Activated CD8-positive, alpha-beta memory T cell treated with anti-CD3 and anti-CD28 coated beads, Interleukin-2, amount 10 ng/mL, durations not matched to agents 7 days and 5 days (primary cell): ENCODE measurements at regions of chr17 and their contacts with region 1.

Region 1: DNA sequence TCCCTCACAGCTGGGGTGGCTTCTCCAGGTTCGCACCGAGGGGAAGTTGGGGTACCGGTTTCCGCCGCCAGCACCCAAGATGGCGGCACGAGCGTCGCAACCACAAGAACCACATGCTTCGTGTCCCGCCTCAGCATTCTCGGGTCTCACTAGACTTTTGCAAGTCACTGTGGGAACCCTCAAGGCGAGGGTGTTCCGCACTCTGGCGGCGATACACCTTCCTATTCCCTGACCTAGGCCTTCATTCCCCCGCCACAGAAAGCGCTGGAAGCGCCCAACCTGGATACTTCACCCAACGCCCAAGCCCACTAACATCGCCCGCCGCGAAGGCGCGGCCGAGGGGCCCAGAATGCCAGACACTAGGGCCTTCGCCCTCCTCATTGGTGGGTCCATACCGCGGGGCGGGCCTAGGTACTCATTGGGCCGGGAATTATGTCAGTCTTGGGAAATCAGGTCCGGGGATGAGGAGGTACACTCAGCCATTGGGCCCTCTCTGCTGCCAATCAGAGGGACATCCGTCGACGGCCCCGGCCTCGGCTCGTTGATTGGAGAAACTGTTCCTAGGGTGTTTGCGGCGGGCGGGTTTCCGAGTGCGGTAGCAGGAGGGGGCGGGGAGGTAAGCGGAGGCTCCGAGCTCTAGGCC is at the start of gene NFE2L1:
- DNase-seq: peak; percentile 100
- ATAC-seq: peak; percentile 95
- H3K4me3 Mint-ChIP-seq: peak within 1 kb of the TSS; percentile 98
- H3K27ac Mint-ChIP-seq: peak within 1 kb of the TSS; percentile 96
- H3K4me1 Mint-ChIP-seq: peaks cover 60% of the 10 kb centered on the region
- H3K27me3 Mint-ChIP-seq: no peaks in the 10 kb centered on the region
- total RNA-seq, gene NFE2L1: 56.1 to 80.8 TPM

Region 2: DNA sequence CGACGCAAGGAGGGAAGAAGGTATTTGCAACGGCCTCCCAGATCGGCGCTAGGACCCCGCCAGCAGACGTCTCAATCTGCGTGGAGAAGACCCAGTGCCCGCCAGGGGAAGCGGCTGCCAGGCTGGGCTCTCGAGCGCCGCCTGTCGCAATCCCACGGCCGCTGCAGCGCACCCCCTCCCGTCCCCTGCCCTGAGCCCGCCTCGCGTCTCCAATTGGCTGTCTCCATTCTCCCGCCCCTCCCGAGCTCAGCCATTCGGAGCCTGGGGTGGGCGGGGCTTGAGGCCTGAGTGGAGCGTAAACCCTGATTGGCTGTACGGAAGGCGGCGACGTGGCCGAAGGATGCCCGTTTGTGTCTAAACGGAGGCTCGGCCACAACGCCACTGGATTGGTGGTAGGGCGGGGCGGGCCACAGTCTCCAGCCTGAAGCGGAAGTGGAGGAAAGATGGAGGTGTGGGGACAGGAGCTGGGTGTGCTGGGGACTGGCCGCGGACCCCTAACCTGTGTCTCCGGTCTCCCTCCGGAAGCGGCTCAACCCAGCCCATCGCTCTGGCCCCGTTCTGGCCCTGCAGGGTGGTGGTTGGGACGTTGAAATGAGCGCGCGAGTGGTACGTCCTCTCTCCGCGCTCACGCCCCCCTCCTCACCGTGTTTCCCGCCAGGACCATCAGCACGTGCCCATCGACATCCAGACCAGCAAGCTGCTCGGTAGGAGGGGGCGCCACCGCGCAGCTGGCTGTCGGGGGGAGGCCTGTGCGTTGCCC is 77.0 kb before region 1 on chr17 and contains the start of gene CDK5RAP3:
- CTCF ChIA-PET with region 1: interaction called, 11 read pairs
- DNase-seq: peak; percentile 100
- ATAC-seq: peak; percentile 97
- H3K4me3 Mint-ChIP-seq: peak within 1 kb of the TSS; percentile 93
- H3K27ac Mint-ChIP-seq: peak within 1 kb of the TSS; percentile 85
- H3K4me1 Mint-ChIP-seq: peaks cover 28% of the 10 kb centered on the region
- H3K27me3 Mint-ChIP-seq: peaks cover 2% of the 10 kb centered on the region
- total RNA-seq, gene CDK5RAP3: 215 to 262 TPM

Region 3: GRCh38 chr17:48037036-48037837 is 10.6 kb before region 1 on chr17 and contains the start of gene COPZ2:
- CTCF ChIA-PET with region 1: interaction called, 34 read pairs
- DNase-seq: peak; percentile 74
- ATAC-seq: peak; percentile 86
- H3K4me3 Mint-ChIP-seq: peak within 1 kb of the TSS; percentile 76
- H3K27ac Mint-ChIP-seq: peak within 1 kb of the TSS; percentile 47
- H3K4me1 Mint-ChIP-seq: peaks cover 14% of the 10 kb centered on the region
- H3K27me3 Mint-ChIP-seq: peaks cover 38% of the 10 kb centered on the region
- total RNA-seq, gene COPZ2: 5.4 to 14.1 TPM

Region 4: GRCh38 chr17:48084932-48085444 is 37.1 kb after region 1 on chr17:
- CTCF ChIA-PET with region 1: interaction called, 21 read pairs
- DNase-seq: no peak
- ATAC-seq: no peak
- H3K4me3 Mint-ChIP-seq: no peak overlapping the region
- H3K27ac Mint-ChIP-seq: no peak overlapping the region
- H3K4me1 Mint-ChIP-seq: peaks cover 12% of the 10 kb centered on the region
- H3K27me3 Mint-ChIP-seq: no peaks in the 10 kb centered on the region

Region 5: DNA sequence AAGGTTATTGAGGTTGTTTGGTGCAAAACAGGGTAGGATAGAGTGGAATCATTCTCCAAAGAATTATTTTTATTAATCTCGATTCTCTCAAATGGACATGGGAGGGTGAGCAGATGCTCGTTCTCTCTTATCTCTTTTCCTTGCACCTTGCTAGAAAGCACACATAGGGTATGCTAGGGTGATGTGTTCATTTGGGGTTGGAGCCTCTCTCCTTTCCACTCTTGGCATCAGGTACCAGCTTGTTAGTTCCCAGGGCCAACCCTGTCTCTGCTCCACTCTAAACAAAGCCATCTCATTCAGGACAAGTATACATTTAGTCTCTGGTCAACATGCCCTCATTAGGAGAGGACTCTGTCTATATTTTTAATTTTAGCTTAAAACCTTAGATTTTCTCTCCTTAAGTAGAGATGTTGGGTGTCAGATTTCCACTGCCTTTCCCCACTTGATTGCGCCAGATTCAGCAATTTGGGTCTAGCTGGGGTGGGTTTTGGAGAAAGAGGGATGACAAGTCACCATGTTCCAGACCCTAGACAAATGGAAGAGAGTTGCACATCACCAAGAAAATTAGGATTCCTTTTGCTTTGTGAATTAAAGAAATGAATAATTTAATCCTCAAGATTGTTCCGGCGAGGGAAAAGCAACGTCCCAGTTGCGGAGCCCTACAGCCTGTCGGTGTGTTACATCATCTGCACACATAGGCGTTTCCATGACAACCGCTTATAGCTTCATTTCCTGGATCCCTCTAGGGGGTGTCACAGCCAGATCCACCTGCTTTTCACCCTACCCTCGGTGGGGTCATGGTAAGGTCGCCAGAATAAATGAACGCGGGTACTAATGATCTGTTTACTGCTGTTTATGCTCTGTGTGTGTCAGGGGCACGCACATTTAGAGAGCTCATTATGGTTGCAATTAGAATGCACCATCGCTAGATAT is 101.3 kb after region 1 on chr17:
- CTCF ChIA-PET with region 1: no interaction called
- DNase-seq: no peak
- ATAC-seq: no peak
- H3K4me3 Mint-ChIP-seq: no peak overlapping the region
- H3K27ac Mint-ChIP-seq: no peak overlapping the region
- H3K4me1 Mint-ChIP-seq: peaks cover 8% of the 10 kb centered on the region
- H3K27me3 Mint-ChIP-seq: no peaks in the 10 kb centered on the region

Region 6: DNA sequence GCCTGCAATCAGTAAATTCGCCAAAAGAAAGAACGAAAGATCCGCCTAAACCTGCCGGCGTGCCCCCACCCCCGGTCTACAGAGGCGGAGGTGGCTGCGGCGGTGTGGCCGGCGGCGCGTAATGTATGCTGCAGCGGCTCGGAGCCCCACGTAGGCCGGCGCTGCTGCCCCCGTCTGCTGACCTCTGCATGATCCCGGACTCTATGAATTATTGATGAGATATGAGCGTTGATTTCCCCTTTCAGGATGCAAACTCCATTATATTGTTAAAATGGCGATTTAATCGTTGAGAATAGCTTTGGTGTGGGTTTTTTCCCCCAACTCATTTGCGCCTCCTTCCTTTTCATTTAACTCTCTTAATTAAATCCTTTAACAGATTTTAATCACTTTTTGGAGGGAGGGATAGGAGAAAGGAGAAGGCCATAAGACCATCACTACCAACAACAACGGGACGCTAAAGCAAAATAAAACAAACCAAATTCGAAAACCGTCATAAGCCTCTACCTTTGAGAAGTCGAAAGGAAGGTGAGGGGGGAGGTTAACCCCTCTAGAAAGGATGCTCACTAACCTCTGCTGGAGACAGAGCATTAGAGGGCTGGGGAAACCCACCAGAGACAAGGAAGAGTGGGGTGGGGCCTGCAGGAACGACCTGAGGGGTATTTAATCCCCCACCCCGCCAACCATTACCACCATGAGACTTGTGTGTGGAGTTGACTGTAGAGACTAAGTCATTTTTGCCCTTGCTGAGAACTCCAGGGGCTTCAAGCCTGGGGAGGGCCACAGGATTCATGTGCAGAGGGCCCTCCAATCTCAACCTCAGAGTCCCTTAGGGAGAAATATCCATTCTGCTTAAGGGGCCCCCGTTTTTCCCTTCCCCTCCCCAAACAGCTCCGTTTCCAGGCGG is 538.7 kb after region 1 on chr17:
- CTCF ChIA-PET with region 1: no interaction called
- DNase-seq: peak; percentile 56
- ATAC-seq: no peak
- H3K4me3 Mint-ChIP-seq: peak overlapping the region; percentile 80
- H3K27ac Mint-ChIP-seq: peak overlapping the region; percentile 82
- H3K4me1 Mint-ChIP-seq: peaks cover 42% of the 10 kb centered on the region
- H3K27me3 Mint-ChIP-seq: peaks cover 74% of the 10 kb centered on the region